A673 (cell line): ENCODE measurements at regions of chr16 and their contacts with region 1.

Region 1: DNA sequence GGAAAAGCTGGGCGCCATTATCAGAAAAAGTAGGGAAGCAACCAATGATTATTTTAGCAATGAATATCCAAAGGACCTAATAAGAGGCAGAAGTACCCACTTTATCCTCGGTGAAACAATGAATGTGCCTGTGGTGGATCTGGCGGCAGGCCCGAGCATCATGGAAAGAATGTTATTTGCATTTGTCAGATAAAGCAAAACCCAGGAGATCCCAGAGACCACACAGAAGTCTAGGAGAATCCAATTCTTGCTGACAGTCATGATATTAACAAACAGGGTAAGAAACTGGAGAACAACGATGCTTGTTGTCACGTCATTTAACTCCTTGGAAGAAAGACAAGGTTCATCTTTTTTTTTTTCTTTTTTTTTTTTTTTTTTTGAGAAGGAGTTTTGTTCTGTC is 12.0 kb upstream of the TNRC6A start:
- DNase-seq: no peak
- H3K4me3 ChIP-seq: no peak overlapping the region
- H3K27ac ChIP-seq: no peak overlapping the region
- H3K4me1 ChIP-seq: no peaks in the 10 kb centered on the region
- H3K27me3 ChIP-seq: no peaks in the 10 kb centered on the region
- CTCF ChIP-seq: no peak

Region 2: GRCh38 chr16:24643489-24643888 is 73.9 kb before region 1 on chr16:
- CTCF ChIA-PET with region 1: no interaction called
- POLR2A ChIA-PET with region 1: interaction called, 15 read pairs
- intact Hi-C with region 1: no loop called
- DNase-seq: peak; percentile 44
- H3K4me3 ChIP-seq: no peak overlapping the region
- H3K27ac ChIP-seq: peak overlapping the region; percentile 15
- H3K4me1 ChIP-seq: peaks cover 17% of the 10 kb centered on the region
- H3K27me3 ChIP-seq: no peaks in the 10 kb centered on the region
- CTCF ChIP-seq: no peak

Region 3: DNA sequence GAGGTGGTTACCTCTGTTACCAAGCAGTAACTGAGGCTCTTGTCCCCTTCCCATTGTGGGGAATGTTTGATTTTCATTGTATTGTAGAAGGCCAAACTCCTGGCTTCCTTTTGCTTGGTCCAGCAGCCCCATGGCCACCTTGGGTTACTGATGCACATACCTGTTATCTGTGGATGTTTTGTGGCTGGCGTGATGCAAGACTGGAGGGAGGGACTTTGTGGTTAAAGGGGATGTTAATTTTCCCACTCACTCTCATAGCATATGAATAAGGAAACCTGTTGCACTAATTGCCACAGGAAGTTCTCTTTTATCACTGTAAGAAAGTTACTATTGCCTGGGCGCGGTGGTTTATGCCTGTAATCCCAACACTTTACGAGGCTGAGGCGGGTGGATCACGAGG is 805.8 kb after region 1 on chr16:
- CTCF ChIA-PET with region 1: no interaction called
- POLR2A ChIA-PET with region 1: no interaction called
- intact Hi-C with region 1: no loop called
- DNase-seq: no peak
- H3K4me3 ChIP-seq: no peak overlapping the region
- H3K27ac ChIP-seq: no peak overlapping the region
- H3K4me1 ChIP-seq: no peaks in the 10 kb centered on the region
- H3K27me3 ChIP-seq: no peaks in the 10 kb centered on the region
- CTCF ChIP-seq: no peak